Activated T-helper 1 cell treated with anti-CD3 and anti-CD28 coated beads, Interleukin-12 subunit alpha, Interleukin-12 subunit beta, Interleukin-2, Interleukin-4 antibody, amounts not matched to agents 30 ng/mL and 10 ng/mL and 1 ng/mL, durations not matched to agents 14 hours and 24 hours and 36 hours (primary cell): ENCODE measurements at regions of chr19 and their contacts with region 1.

Region 1: DNA sequence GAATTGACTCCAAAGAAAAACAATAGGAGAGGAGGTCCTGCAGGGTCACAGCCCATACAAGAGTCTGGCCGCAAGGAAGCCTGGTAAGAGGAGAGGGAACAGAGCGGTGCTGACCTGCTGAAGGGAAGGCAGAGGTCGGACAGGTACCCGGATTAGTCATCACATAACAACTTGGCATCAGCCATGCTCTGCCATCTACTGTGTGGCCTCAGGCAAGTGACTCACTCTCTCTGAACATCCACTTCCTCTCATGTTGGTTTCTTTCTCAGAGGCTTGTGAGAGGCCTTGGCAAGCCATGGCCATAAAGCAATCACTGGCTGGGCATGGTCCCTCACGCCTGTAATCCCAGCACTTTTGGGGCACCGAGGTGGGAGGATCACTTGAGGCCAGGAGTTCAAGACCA is 7.4 kb upstream of the CAPNS1 start:
- DNase-seq: peak; percentile 17
- H3K4me3 Mint-ChIP-seq: peak overlapping the region; percentile 7
- H3K27ac Mint-ChIP-seq: peak overlapping the region; percentile 78
- H3K4me1 Mint-ChIP-seq: peaks cover 30% of the 10 kb centered on the region
- H3K27me3 Mint-ChIP-seq: peaks cover 1% of the 10 kb centered on the region

Region 2: GRCh38 chr19:35995048-35995993 is 137.2 kb before region 1 on chr19 and contains the start of gene SDHAF1:
- intact Hi-C with region 1: loop called (anchors 5 kb)
- DNase-seq: peak; percentile 93
- H3K4me3 Mint-ChIP-seq: peak within 1 kb of the TSS; percentile 94
- H3K27ac Mint-ChIP-seq: peak within 1 kb of the TSS; percentile 92
- H3K4me1 Mint-ChIP-seq: peaks cover 24% of the 10 kb centered on the region
- H3K27me3 Mint-ChIP-seq: peaks cover 3% of the 10 kb centered on the region
- total RNA-seq, gene SDHAF1: 21.2 and 24.5 TPM in 2 replicates

Region 3: GRCh38 chr19:36114763-36115452 is 17.6 kb before region 1 on chr19 and contains the start of gene POLR2I:
- intact Hi-C with region 1: loop called (anchors 1 kb)
- DNase-seq: peak; percentile 98
- H3K4me3 Mint-ChIP-seq: peak within 1 kb of the TSS; percentile 98
- H3K27ac Mint-ChIP-seq: peak within 1 kb of the TSS; percentile 92
- H3K4me1 Mint-ChIP-seq: peaks cover 38% of the 10 kb centered on the region
- H3K27me3 Mint-ChIP-seq: peaks cover 1% of the 10 kb centered on the region
- total RNA-seq, gene POLR2I: 76.3 and 92.4 TPM in 2 replicates

Region 4: GRCh38 chr19:36418287-36419001 is 286.0 kb after region 1 on chr19 and contains the start of gene ZFP82:
- intact Hi-C with region 1: loop called (anchors 5 kb)
- DNase-seq: peak; percentile 73
- H3K4me3 Mint-ChIP-seq: peak within 1 kb of the TSS; percentile 93
- H3K27ac Mint-ChIP-seq: peak within 1 kb of the TSS; percentile 94
- H3K4me1 Mint-ChIP-seq: peaks cover 18% of the 10 kb centered on the region
- H3K27me3 Mint-ChIP-seq: peaks cover 5% of the 10 kb centered on the region
- total RNA-seq, gene ZFP82: 5.1 and 5.3 TPM in 2 replicates